ENCODE measurements at regions of chr12 and their contacts with region 1.

Region 1: GRCh38 chr12:71439362-71440314 is at the start of gene LGR5:
- DNase-seq: peak; percentile 23
- H3K4me3 ChIP-seq: peak within 1 kb of the TSS in 1 of 3 experiments; percentile 11
- H3K27ac ChIP-seq: no peak within 1 kb of the TSS
- H3K4me1 ChIP-seq: peaks cover 11% of the 10 kb centered on the region
- H3K27me3 ChIP-seq: peaks cover 42% of the 10 kb centered on the region
- CTCF ChIP-seq: no peak
- total RNA-seq, gene LGR5: 0.33 TPM in 1 of 2 donors, not detected in the other

Region 2: GRCh38 chr12:71541583-71541982 is 101.9 kb after region 1 on chr12:
- CTCF ChIA-PET with region 1: no interaction called
- dilution Hi-C with region 1: no loop called
- in situ Hi-C with region 1: no loop called
- intact Hi-C with region 1: loop called (anchors 5 kb)
- DNase-seq: no peak
- H3K4me3 ChIP-seq: no peak overlapping the region
- H3K27ac ChIP-seq: no peak overlapping the region
- H3K4me1 ChIP-seq: no peaks in the 10 kb centered on the region
- H3K27me3 ChIP-seq: no peaks in the 10 kb centered on the region
- CTCF ChIP-seq: no peak

Measured in mammary epithelial cell (primary cell).